Endothelial cell of umbilical vein (primary cell): ENCODE measurements at regions of chr13 and their contacts with region 1.

Region 1: GRCh38 chr13:77907666-77908341 is 10.8 kb downstream of the EDNRB start:
- DNase-seq: peak; percentile 98
- H3K4me3 ChIP-seq: no peak overlapping the region
- H3K27ac ChIP-seq: peak overlapping the region; percentile 50
- H3K4me1 ChIP-seq: peaks cover 6% of the 10 kb centered on the region
- H3K27me3 ChIP-seq: no peaks in the 10 kb centered on the region
- CTCF ChIP-seq: no peak
- POLR2A ChIP-seq: no peak

Region 2: DNA sequence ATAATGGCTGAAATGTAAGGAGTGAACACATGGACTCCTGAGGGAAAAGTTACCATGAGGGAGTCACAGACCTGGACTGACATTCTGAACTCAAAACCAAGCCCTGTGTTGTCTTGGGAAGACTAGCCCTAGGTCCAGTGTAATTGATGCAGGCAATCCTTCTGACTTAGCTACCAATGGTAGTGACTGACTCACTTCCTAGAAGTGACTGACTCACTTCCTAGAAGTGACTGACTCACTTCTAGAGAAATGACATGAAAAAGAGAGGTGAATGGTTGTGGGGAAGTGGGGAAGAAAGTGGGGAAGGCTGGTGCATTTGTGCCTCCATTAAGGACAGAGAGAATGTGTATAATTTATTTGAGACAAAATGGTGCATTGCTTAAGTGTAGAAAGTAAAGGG is 39.1 kb before region 1 on chr13:
- CTCF ChIA-PET with region 1: no interaction called
- POLR2A ChIA-PET with region 1: interaction called, 4 read pairs
- dilution Hi-C with region 1: no loop called
- intact Hi-C with region 1: loop called (anchors 2 kb)
- DNase-seq: peak; percentile 26
- H3K4me3 ChIP-seq: no peak overlapping the region
- H3K27ac ChIP-seq: no peak overlapping the region
- H3K4me1 ChIP-seq: no peaks in the 10 kb centered on the region
- H3K27me3 ChIP-seq: no peaks in the 10 kb centered on the region
- CTCF ChIP-seq: no peak
- POLR2A ChIP-seq: no peak

Region 3: GRCh38 chr13:77878190-77878589 is 29.6 kb before region 1 on chr13:
- CTCF ChIA-PET with region 1: no interaction called
- POLR2A ChIA-PET with region 1: interaction called, 10 read pairs
- dilution Hi-C with region 1: no loop called
- intact Hi-C with region 1: no loop called
- DNase-seq: no peak
- H3K4me3 ChIP-seq: no peak overlapping the region
- H3K27ac ChIP-seq: no peak overlapping the region
- H3K4me1 ChIP-seq: no peaks in the 10 kb centered on the region
- H3K27me3 ChIP-seq: no peaks in the 10 kb centered on the region
- CTCF ChIP-seq: no peak
- POLR2A ChIP-seq: no peak